AG04449 (cell line): ENCODE measurements at regions of chr3 and their contacts with region 1.

Region 1: DNA sequence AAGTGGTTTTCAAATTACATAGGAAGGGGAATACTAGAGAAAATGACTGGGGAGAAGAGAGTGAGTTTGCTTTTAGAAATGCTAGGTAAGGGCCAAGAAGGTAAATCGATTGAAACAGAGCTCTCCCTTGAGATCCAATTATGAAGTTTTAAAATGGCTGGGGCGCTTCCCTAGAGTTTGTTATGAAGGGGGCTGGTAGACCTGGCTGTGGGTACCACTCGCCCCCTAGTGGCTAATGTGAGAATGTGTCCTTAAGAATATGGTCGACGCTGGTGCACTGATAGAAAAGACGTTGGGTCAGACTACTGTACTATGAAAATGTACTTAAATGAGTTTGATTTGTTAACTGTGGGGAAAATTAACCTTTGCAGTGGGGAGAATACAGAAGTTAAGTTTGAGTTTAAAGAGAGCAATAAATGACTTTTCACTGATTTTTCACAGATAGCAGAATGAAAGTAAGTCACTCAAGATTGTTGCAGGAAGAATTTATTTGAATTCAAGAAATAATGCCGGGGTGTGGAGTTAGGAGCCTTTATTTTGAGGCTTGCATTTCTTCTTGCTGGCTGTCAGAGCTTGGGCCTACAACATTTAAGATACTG is 9.2 kb downstream of the TMPRSS7 start:
- DNase-seq: no peak
- H3K4me3 ChIP-seq: no peak overlapping the region
- CTCF ChIP-seq: peak; percentile 75

Region 2: DNA sequence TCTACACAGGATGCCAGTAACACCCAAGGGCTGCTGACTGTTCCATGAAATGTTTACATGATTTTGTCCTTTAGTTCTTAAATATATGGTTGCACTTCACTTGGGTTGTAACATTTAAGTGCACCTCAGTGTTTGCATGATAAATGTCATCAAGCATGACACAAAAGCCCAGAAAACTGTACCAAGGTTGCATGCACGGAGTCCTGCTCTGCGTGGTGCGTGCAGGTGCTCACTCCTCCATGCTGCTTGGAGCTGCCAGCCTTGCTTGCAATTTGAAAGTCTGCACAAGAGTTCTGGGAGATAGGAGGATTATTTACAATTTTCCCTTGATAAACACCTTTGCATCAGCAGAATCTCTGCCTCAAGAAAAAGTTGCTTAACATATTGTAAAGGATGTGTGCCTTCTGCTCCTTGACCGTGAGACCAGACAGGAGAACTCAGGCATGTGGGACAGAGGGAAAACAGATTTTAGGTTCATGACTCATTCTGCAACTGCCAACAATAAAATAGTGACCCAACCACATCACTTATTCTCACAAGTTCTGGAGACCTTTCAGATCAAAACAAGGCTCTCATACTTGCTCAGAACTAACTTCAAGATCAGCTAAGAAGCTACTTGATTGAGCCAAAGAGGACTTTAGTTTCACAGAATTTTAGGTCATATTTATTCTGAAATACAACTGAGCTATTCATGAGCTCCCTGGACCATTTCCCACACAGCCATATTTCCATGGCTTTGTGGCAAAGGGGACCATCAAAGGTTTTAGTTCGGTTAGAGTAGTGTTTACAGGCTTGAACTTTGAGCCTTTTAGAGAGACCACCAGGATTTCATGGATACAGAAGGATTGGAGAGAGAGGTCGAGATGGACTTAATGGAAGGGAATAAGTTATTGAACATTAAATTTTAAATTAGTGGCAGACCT is 320.1 kb before region 1 on chr3:
- CTCF ChIA-PET with region 1: interaction called, 25 read pairs
- POLR2A ChIA-PET with region 1: no interaction called
- DNase-seq: peak; percentile 66
- H3K4me3 ChIP-seq: no peak overlapping the region
- CTCF ChIP-seq: no peak

Region 3: GRCh38 chr3:111967651-111968274 is 75.9 kb before region 1 on chr3:
- CTCF ChIA-PET with region 1: interaction called, 13 read pairs
- POLR2A ChIA-PET with region 1: no interaction called
- DNase-seq: peak; percentile 65
- H3K4me3 ChIP-seq: no peak overlapping the region
- CTCF ChIP-seq: peak; percentile 87

Region 4: GRCh38 chr3:111989061-111989678 is 54.5 kb before region 1 on chr3:
- CTCF ChIA-PET with region 1: interaction called, 55 read pairs
- POLR2A ChIA-PET with region 1: no interaction called
- DNase-seq: peak; percentile 49
- H3K4me3 ChIP-seq: no peak overlapping the region
- CTCF ChIP-seq: peak; percentile 70

Region 5: GRCh38 chr3:112007633-112008032 is 36.1 kb before region 1 on chr3:
- CTCF ChIA-PET with region 1: interaction called, 39 read pairs
- POLR2A ChIA-PET with region 1: no interaction called
- DNase-seq: peak; percentile 70
- H3K4me3 ChIP-seq: no peak overlapping the region
- CTCF ChIP-seq: no peak

Region 6: DNA sequence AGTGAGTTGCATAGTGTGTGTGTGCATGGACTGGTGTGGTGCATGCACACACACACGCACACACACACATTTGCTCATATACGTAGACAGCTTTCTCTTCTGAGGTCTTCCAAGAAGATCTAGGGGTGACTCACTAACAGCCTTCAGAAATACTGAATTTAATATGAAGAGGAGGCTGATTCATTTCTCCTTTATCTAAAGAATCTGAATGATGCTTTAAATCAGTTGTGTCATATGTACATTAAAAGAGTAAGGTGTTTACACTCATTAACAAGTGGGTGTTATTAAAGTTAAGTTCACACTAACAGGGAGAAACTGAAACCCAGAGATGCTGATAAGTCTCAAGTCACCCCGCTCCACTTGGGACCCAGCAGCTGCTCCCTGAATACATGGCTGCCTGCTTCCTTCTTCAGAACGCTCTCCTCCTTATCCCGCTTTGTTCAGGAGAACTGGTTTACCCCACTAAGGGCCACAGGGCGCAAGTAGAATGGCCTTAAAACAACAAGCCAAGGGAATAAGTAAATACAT is 12.8 kb after region 1 on chr3:
- CTCF ChIA-PET with region 1: interaction called, 53 read pairs
- POLR2A ChIA-PET with region 1: no interaction called
- DNase-seq: peak; percentile 69
- H3K4me3 ChIP-seq: no peak overlapping the region
- CTCF ChIP-seq: no peak